CD4-positive, alpha-beta memory T cell (primary cell): ENCODE measurements at regions of chr11 and their contacts with region 1.

Region 1: DNA sequence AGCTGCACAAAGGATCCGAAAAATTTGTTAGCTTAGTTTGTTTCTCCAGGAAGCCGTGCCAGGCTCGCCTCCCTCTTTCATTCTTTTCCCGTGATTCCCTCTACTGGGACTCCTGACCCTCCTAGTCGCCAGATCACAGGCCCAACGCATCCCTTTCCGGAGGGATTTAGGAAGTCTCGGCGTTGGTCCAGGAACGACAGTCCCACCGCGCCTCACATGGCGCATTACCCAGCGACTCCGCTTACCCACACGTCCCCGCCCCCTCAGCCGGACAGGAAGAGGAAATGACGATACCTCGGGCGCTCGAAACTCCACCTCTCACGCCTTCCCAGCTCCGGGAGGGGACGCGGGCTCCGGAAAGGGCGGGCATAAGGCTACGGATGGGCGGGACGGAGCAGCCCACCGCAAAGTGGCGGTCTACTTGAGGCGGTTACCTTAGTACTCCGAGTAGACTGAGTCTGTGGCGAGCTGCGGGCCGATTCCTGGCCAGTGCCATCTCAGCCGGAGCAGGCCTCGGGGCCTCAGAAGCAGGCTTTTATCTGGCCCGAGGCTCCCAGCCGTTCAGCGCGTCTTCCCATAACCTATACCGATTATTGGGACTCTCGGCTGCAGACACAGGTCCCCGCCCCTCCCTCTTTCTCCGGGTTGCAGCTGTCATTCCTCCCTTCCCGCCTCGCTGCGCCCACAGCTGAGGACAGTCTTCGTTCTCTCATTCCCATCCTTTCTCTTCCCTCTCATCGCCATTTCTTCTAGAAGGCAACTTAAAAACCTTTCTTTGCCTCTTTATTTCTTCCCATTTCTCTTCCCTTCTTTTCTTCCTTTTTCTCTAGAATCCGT is at the start of gene CCDC15:
- DNase-seq: peak; percentile 91 to 95 (median 93)
- H3K4me3 ChIP-seq: peak within 1 kb of the TSS; percentile 33 to 63
- H3K4me3 Mint-ChIP-seq: peak within 1 kb of the TSS in 1 of 8 donors; percentile 32
- H3K27ac ChIP-seq: peak within 1 kb of the TSS; percentile 71
- H3K27ac Mint-ChIP-seq: no peak within 1 kb of the TSS
- H3K4me1 ChIP-seq: peaks cover 50% of the 10 kb centered on the region
- H3K4me1 Mint-ChIP-seq: peaks cover 0 to 12% (median 7%) of the 10 kb centered on the region in 4 donors
- H3K27me3 ChIP-seq: no peaks in the 10 kb centered on the region
- H3K27me3 Mint-ChIP-seq: no peaks in the 10 kb centered on the region
- total RNA-seq, gene CCDC15: 2.6 to 2.7 TPM

Region 2: GRCh38 chr11:123741159-123742028 is 1212.6 kb before region 1 on chr11 and contains the start of gene ZNF202:
- CTCF ChIA-PET with region 1: no interaction called
- POLR2A ChIA-PET with region 1: no interaction called
- intact Hi-C with region 1: loop called (anchors 5 kb)
- DNase-seq: peak; percentile 89 to 91 (median 89)
- H3K4me3 ChIP-seq: peak within 1 kb of the TSS; percentile 70 to 80
- H3K4me3 Mint-ChIP-seq: peak within 1 kb of the TSS; percentile 91 to 99 (median 98)
- H3K27ac ChIP-seq: peak within 1 kb of the TSS; percentile 69
- H3K27ac Mint-ChIP-seq: peak within 1 kb of the TSS; percentile 81 to 98 (median 96)
- H3K4me1 ChIP-seq: peaks cover 27% of the 10 kb centered on the region
- H3K4me1 Mint-ChIP-seq: peaks cover 27 to 55% (median 37%) of the 10 kb centered on the region in 4 donors
- H3K27me3 ChIP-seq: no peaks in the 10 kb centered on the region
- H3K27me3 Mint-ChIP-seq: peaks cover 0 to 3% of the 10 kb centered on the region in 2 donors
- total RNA-seq, gene ZNF202: 17.4 to 21.6 TPM

Region 3: DNA sequence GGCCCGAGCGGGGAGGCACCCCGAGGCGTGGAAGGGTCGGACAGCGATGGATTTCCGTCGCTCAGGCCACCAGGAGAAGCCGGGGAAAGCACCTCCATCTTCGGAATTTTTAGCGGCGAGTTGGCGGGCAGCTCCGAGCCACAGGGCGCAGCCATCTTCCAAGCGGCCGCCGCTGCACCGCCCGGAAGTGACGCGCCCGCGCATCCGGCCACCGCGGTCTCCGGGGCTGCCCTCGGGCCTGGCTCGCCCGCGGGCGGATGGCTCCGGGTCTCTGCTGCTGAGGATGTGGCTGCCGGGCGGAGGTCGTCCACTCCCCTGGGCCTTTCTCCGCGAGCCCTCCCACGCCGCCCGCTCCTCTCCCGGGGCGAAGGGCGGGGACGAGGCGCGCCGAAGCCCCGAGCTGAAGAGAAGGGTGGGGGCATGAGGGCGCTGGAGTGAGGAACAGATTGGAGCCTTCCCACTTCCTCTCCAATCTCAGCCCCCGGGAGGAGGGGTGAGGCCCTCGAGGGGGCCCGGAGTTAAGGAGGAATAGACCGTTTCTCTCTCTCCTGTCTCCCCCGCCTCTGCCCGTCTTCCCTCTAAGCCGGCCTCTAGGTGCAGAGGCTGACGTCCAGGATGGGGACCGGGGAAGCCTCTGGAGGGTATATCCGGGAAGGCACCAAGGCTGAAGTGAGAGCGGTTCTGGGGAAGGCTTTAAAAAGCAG is 153.6 kb before region 1 on chr11 and contains the start of gene MSANTD2:
- CTCF ChIA-PET with region 1: no interaction called
- POLR2A ChIA-PET with region 1: no interaction called
- intact Hi-C with region 1: loop called (anchors 5 kb)
- DNase-seq: peak; percentile 77 to 84 (median 79)
- H3K4me3 ChIP-seq: peak within 1 kb of the TSS; percentile 66 to 93
- H3K4me3 Mint-ChIP-seq: peak within 1 kb of the TSS; percentile 93 to 98 (median 96)
- H3K27ac ChIP-seq: peak within 1 kb of the TSS; percentile 78
- H3K27ac Mint-ChIP-seq: peak within 1 kb of the TSS; percentile 90 to 98 (median 97)
- H3K4me1 ChIP-seq: peaks cover 28% of the 10 kb centered on the region
- H3K4me1 Mint-ChIP-seq: peaks cover 18 to 40% (median 26%) of the 10 kb centered on the region in 4 donors
- H3K27me3 ChIP-seq: no peaks in the 10 kb centered on the region
- H3K27me3 Mint-ChIP-seq: peaks cover 0 to 2% of the 10 kb centered on the region in 2 donors
- total RNA-seq, gene MSANTD2: 25.9 to 26.3 TPM

Region 4: GRCh38 chr11:124943254-124943616 is 10.7 kb before region 1 on chr11:
- CTCF ChIA-PET with region 1: interaction called, 11 read pairs
- POLR2A ChIA-PET with region 1: interaction called, 10 read pairs
- intact Hi-C with region 1: no loop called
- DNase-seq: no peak
- H3K4me3 ChIP-seq: no peak overlapping the region
- H3K4me3 Mint-ChIP-seq: no peak overlapping the region
- H3K27ac ChIP-seq: no peak overlapping the region
- H3K27ac Mint-ChIP-seq: peak overlapping the region in 1 of 7 donors; percentile 53
- H3K4me1 ChIP-seq: peaks cover 8% of the 10 kb centered on the region
- H3K4me1 Mint-ChIP-seq: peaks cover 5 to 6% (median 6%) of the 10 kb centered on the region in 4 donors
- H3K27me3 ChIP-seq: no peaks in the 10 kb centered on the region
- H3K27me3 Mint-ChIP-seq: peaks cover 4 to 7% of the 10 kb centered on the region in 2 donors

Region 5: GRCh38 chr11:124970925-124971324 is 17.0 kb after region 1 on chr11:
- CTCF ChIA-PET with region 1: no interaction called
- POLR2A ChIA-PET with region 1: no interaction called
- intact Hi-C with region 1: no loop called
- DNase-seq: no peak
- H3K4me3 ChIP-seq: no peak overlapping the region
- H3K4me3 Mint-ChIP-seq: no peak overlapping the region
- H3K27ac ChIP-seq: no peak overlapping the region
- H3K27ac Mint-ChIP-seq: no peak overlapping the region
- H3K4me1 ChIP-seq: no peaks in the 10 kb centered on the region
- H3K4me1 Mint-ChIP-seq: no peaks in the 10 kb centered on the region
- H3K27me3 ChIP-seq: no peaks in the 10 kb centered on the region
- H3K27me3 Mint-ChIP-seq: no peaks in the 10 kb centered on the region

Region 6: DNA sequence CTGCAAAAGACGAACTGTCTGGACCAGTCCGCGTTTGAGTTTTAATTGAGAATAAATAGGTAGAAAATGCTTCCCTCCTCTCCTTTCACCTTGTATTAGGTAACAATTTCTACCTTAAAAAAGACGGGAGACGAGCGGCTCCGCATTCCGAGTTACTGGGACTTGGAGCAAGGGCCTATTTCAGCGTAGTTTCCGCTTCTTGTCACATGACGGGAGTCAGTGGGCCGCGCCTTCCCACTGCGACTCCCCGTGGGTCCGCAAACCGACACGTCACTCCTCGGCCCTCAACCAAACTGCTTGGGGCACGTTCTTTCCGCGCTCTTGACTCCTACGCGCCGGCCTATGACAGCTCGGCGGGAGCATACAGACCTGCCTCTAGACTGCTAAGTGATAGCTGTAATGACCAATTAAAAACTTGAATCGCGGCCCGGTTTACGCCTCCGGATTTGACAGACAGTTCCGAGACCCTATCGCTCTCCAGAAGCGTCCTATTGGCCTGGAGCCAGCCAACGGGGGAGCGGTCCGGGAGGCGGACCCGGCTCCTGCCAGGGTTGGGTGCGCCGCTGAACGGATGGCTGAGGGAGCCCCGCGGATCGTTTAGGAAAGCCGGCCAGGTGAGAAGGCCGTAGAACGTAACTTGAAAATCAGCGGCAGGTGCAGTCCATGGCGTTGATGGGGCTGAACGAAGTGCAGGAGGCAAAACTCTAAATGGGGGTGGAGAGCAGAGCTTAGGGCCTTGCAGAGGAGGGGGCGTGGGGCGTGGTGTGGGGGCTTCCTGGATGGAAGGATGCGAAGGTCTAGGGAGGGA is 638.5 kb after region 1 on chr11 and contains the start of gene STT3A:
- CTCF ChIA-PET with region 1: no interaction called
- POLR2A ChIA-PET with region 1: no interaction called
- intact Hi-C with region 1: loop called (anchors 1 kb)
- DNase-seq: peak; percentile 98 to 99 (median 99)
- H3K4me3 ChIP-seq: peak within 1 kb of the TSS; percentile 97 to 98
- H3K4me3 Mint-ChIP-seq: peak within 1 kb of the TSS; percentile 92 to 98 (median 94)
- H3K27ac ChIP-seq: peak within 1 kb of the TSS; percentile 96
- H3K27ac Mint-ChIP-seq: peak within 1 kb of the TSS; percentile 94 to 100 (median 98)
- H3K4me1 ChIP-seq: peaks cover 38% of the 10 kb centered on the region
- H3K4me1 Mint-ChIP-seq: peaks cover 32 to 59% (median 45%) of the 10 kb centered on the region in 4 donors
- H3K27me3 ChIP-seq: no peaks in the 10 kb centered on the region
- H3K27me3 Mint-ChIP-seq: no peaks in the 10 kb centered on the region
- total RNA-seq, gene STT3A: 133 to 138 TPM

Region 7: DNA sequence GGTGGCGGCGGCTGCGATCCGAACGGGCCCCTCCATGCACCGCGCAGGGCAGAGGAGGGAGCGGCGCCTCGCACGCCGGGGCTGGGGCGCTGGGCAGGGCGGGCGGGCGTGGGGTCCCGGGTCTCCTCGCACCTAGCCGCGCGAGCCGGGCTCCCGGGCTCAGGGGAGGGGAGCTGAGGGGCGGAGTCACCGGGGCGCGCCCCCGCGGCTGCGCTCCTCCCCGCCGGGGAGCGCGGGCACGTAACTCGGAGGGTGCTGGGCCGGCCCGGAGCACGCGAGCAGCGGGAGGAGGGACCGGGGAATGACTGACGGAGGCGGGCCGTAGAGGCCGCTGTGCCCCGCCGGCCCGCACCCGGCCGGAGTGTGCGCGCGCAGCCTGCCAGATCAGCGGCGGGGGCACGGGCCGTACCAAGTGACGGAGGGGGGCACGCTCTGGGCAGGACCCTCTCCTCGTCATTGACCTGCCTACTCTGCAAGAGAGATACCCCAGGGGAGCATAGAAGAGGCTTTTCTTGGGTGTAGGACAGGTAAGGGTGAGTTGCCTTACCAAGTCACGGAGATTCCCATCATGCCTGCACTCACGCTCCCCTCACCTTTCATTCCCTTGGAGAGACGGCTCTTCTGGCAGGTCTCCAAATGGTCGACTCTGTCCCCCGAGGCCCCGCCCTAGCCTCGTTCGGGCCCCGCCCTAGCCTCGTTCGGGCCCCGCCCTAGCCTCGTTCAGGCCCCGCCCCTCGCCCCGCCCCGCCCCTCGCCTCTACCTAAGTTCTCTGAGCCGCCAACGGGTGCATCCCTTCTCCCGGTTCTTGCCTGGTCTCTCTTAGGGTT is 1108.9 kb after region 1 on chr11 and contains the start of gene CDON:
- CTCF ChIA-PET with region 1: no interaction called
- POLR2A ChIA-PET with region 1: no interaction called
- intact Hi-C with region 1: loop called (anchors 2 kb)
- DNase-seq: peak; percentile 88 to 95 (median 93)
- H3K4me3 ChIP-seq: peak within 1 kb of the TSS; percentile 47 to 76
- H3K4me3 Mint-ChIP-seq: peak within 1 kb of the TSS; percentile 86 to 96 (median 90)
- H3K27ac ChIP-seq: peak within 1 kb of the TSS; percentile 73
- H3K27ac Mint-ChIP-seq: peak within 1 kb of the TSS; percentile 84 to 99 (median 96)
- H3K4me1 ChIP-seq: peaks cover 14% of the 10 kb centered on the region
- H3K4me1 Mint-ChIP-seq: peaks cover 5 to 14% (median 9%) of the 10 kb centered on the region in 4 donors
- H3K27me3 ChIP-seq: no peaks in the 10 kb centered on the region
- H3K27me3 Mint-ChIP-seq: peaks cover 0 to 2% of the 10 kb centered on the region in 2 donors
- total RNA-seq, gene CDON: 2.7 to 3.1 TPM